Cardiac septum (tissue), 1 donor: ENCODE measurements at regions of chr10 and their contacts with region 1.

Region 1: GRCh38 chr10:91251430-91252056 is 31.1 kb downstream of the PCGF5 start:
- DNase-seq: no peak

Region 2: DNA sequence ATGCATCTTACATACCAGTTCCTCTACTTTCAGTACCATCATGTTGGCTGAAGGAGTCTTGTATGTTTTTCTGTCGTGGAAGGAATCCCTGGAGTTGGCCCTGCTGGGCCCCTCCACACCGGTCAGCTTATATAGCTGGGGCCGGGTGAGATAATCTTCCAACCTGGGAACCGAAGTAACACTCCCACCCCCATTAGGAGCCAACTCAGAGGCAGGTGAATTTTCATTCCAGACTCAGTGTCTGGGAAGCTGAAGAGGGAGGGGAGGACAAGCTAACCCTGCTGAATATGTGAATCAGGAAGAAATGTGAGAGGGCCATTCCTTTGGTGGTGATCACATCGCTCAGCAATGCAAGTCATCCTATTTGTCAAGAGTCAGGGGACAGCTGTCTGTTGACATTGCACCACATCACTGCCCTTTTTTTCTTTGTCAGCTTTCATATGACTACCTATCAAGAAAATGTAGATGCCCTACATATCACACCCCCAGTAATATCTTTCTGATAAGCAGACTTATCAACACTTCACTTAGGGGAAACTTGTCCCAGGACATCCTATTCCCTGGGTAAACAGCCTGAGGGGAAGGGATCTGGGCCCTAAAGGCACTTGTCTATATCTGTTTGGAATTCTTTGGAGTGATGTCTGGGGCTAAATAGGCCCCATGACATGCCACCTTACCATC is 330.4 kb before region 1 on chr10 and contains the start of gene ANKRD1:
- intact Hi-C with region 1: loop called (anchors 5 kb)
- DNase-seq: peak; percentile 81
- total RNA-seq, gene ANKRD1: 8,251 TPM

Region 3: DNA sequence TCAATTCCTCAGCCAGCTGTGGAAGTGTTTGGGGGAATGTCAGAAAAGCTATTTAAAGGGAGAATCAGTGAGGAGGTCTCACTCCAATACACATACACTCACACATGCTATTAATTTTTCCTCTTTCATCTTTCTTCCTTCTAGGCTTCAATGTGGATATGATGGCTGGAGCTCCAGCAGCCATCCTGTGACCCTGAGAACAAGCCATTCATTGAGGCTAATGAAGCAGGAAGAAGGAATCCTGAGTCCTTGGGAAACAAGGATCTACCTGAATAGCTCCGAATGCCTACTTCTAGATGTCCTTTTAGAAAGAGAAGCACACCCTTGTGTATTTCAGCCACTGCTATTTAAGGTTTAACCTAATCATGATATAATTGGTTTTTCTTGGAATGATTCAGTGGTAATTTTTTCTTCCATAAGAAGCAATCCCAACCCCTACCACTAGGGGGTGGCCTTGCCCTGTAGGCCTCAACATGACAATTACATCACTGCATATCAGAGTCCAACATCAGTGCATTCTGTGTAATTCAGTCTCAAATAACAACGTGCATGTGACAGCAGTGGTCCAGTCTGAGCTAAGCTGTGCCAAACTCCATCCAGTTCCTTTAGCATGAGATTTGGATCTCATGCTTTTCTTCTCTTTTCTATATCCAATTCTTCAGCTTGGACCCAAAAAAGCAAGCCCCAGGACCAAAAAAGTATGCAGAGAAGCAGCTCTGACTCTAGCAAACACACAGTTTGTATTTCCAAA is 245.4 kb before region 1 on chr10:
- intact Hi-C with region 1: loop called (anchors 2 kb)
- DNase-seq: no peak

Region 4: DNA sequence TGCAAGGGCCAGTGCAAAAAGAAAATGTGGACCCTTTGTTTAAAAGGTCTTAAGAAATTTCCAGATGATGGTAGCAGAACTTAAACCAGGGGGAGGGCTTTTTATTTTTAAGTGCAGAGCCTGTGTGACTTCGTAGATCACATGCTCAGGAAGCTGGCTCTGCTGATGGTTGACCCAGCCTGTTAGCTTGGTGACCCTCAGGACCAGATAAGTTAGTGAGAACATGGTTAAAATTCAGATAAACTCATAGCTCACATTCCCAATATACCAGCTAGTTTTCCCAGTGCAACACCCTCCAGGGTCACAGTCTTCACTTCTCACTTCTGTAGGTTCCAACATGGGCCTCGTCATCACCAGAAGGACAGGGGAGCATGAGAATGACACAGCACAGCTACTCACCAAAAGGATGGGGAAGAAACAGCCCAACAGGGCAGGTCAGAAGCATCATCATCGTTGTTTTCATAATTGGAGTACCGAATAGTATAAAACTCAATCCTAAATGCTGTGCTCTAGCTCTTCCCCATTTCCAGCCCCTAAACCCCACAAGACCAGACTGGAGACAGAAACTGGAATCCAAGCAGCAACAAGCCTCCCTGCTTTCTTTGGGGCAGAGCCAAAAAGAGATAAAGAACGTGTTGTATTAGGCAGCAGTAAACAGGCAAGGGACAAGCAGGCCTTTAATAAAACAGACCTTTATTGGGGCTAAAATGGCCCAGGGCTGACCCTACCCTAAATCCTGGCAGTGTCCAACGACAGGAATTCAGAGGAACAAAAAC is 228.4 kb before region 1 on chr10:
- intact Hi-C with region 1: loop called (anchors 5 kb)
- DNase-seq: no peak

Region 5: GRCh38 chr10:91043173-91043910 is 208.2 kb before region 1 on chr10:
- intact Hi-C with region 1: loop called (anchors 5 kb)
- DNase-seq: no peak

Region 6: DNA sequence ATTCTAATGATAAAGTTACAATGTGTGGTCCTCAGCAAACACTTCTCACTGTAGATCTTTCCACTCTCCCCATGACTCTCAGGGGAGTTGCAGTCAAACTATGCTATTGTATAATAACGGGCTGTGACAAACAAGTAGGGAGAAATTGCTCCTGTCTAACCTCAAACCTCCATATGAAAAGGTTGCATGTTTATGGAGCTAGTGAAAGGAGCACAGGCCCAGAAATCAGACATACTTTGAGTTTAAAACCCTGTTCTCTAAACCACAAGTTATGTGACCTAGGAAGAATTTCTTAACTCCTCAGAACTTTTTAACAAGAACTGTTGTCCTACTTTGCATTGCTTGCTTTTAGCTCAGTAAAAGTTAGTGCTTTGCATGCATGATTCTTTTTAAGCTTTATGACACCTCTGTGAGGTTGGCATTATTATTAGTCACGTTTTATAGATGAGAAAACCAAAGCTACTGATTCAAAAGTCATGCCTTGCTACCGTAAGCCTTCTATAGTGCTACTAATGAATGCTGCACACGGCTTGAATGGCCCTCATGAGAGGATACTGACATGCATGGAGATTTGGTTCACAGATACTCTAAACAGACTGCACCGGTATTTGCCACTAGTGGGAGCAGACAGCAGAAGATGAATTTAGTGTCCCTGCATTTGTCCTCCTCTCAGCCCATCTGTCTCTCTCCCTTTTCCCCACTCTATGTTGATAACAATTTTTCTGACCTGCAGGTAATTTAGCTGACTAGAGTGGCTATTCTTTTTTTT is 160.6 kb before region 1 on chr10:
- intact Hi-C with region 1: loop called (anchors 5 kb)
- DNase-seq: no peak

Region 7: DNA sequence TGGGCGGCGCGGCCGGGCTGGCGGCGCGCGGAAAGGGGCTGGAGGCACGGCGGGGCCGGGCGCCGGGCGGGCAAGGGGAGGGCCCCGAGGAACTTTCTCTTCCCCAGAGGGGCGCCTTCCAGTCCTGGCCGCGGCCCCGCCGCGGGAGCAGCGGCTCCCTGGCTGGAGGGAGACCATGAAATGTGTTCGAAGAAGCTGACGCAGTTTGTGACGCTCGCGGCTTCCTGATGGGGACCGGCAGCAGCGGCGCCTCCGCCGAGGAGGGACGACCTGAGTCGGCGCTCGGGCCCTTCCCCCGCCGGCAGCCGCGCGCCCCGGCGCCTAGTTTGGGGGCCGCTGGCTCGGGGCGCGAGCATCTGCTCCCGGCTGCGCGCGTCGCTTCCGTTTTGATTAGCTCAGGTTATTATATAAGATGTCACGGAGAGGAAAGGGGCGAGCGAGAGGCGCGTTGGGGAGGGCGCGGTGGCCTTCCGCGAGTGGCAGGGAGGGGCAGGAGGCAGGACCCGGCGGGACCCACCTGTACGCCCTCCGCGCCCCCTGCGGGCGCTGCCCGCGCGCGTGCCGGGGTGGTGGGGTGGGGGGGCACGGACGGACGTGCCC is 88.2 kb before region 1 on chr10:
- intact Hi-C with region 1: loop called (anchors 5 kb)
- DNase-seq: peak; percentile 83